Right cardiac atrium (tissue), 5 donors: ENCODE measurements at regions of chr7 and their contacts with region 1.

Region 1: GRCh38 chr7:73342645-73343044 is 14.7 kb downstream of the FKBP6 start:
- DNase-seq: peak in 1 of 3 donors; percentile 55
- ATAC-seq: peak; percentile 84 to 90
- H3K4me3 ChIP-seq: no peak overlapping the region
- H3K27ac ChIP-seq: no peak overlapping the region
- H3K4me1 ChIP-seq: no peaks in the 10 kb centered on the region
- H3K27me3 ChIP-seq: no peaks in the 10 kb centered on the region

Region 2: DNA sequence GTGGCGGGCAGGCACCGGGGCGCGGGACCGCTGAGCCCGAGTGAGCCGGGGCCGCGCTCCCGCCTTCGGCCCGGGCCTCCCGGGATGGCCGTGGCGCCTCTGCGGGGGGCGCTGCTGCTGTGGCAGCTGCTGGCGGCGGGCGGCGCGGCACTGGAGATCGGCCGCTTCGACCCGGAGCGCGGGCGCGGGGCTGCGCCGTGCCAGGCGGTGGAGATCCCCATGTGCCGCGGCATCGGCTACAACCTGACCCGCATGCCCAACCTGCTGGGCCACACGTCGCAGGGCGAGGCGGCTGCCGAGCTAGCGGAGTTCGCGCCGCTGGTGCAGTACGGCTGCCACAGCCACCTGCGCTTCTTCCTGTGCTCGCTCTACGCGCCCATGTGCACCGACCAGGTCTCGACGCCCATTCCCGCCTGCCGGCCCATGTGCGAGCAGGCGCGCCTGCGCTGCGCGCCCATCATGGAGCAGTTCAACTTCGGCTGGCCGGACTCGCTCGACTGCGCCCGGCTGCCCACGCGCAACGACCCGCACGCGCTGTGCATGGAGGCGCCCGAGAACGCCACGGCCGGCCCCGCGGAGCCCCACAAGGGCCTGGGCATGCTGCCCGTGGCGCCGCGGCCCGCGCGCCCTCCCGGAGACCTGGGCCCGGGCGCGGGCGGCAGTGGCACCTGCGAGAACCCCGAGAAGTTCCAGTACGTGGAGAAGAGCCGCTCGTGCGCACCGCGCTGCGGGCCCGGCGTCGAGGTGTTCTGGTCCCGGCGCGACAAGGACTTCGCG is 91.5 kb after region 1 on chr7:
- intact Hi-C with region 1: loop called in 1 of 4 experiments (anchors 5 kb)
- DNase-seq: peak in 2 of 3 donors; percentile 45 to 62
- ATAC-seq: no peak
- H3K4me3 ChIP-seq: peak overlapping the region; percentile 44
- H3K27ac ChIP-seq: no peak overlapping the region
- H3K4me1 ChIP-seq: no peaks in the 10 kb centered on the region
- H3K27me3 ChIP-seq: no peaks in the 10 kb centered on the region

Region 3: DNA sequence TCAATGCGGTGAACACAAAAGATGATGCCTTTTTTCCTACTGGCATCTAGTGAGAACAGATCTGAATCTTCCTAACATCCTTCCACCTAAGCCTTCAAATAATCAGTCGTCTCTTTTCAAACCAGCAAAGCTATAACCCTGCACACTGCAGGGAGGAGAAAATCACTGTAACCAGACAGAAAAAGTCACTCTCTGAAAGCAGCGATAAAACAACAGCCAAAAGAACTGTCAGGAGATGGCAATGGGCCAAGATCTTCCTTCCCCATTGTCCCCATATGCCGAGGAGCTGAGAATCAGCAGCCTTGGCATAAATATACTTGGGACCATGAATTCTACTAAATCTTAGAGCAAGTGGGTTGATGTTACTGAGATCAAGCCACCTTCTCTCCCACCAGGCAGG is 104.0 kb after region 1 on chr7:
- intact Hi-C with region 1: loop called in 3 of 4 experiments (anchors 5 to 10 kb)
- DNase-seq: no peak
- ATAC-seq: no peak
- H3K4me3 ChIP-seq: no peak overlapping the region
- H3K27ac ChIP-seq: no peak overlapping the region
- H3K4me1 ChIP-seq: no peaks in the 10 kb centered on the region
- H3K27me3 ChIP-seq: no peaks in the 10 kb centered on the region

Region 4: DNA sequence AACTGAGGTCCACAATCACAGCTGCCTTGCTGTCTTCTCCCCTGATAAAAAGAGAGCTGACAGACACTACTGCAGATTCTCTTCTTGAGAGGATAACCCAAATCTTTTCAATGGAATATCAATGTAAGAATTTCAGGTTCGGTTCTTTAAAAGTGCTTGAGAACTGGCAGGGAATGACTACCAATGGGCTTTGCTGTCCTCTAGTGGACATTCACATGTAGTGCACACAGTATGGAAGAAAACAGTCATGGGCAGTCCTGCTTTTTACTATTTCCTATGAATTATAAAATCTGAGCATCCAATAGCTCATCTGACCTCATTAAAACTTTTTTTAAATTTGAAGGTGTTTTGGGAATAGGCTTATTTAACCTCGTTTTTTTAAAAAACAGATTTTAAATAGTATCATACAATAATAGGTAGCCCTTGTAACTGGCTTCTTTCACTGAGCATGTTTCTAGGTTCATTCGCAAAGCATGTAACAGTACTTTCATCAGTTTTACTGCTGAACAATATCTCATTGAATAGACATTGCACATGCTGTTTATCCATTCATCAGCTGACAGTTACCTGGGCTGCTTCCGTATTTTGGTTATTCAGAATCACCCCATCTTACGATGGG is 109.2 kb after region 1 on chr7:
- intact Hi-C with region 1: loop called in 3 of 4 experiments (anchors 5 to 10 kb)
- DNase-seq: no peak
- ATAC-seq: peak; percentile 65 to 69
- H3K4me3 ChIP-seq: no peak overlapping the region
- H3K27ac ChIP-seq: no peak overlapping the region
- H3K4me1 ChIP-seq: no peaks in the 10 kb centered on the region
- H3K27me3 ChIP-seq: no peaks in the 10 kb centered on the region